ENCODE measurements at regions of chr2 and their contacts with region 1.

Region 1: DNA sequence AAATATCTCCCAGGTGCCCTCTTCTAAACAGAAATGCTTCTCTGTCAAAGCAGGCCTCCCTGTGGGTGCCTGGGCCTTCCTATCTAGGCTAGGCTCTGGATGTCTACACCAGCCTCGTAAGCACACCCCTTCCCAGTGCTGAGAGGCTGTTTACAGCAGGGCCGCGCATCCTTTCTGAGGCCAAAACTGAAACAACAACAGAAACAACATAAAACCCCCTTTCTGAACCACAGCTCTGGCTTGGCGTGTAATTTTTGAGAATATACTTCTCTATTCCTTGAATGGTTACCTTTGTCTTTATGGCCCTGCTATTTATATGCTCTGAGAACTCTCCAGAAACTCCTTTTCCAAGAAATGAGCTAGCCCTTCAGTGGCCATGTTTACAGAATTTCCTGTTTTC is 118.4 kb downstream of the BCL2L11 start:
- DNase-seq: peak; percentile 86
- H3K4me3 Mint-ChIP-seq: peak overlapping the region; percentile 63
- H3K27ac Mint-ChIP-seq: peak overlapping the region; percentile 91
- H3K4me1 Mint-ChIP-seq: peaks cover 31% of the 10 kb centered on the region
- H3K27me3 Mint-ChIP-seq: peaks cover 2% of the 10 kb centered on the region

Region 2: DNA sequence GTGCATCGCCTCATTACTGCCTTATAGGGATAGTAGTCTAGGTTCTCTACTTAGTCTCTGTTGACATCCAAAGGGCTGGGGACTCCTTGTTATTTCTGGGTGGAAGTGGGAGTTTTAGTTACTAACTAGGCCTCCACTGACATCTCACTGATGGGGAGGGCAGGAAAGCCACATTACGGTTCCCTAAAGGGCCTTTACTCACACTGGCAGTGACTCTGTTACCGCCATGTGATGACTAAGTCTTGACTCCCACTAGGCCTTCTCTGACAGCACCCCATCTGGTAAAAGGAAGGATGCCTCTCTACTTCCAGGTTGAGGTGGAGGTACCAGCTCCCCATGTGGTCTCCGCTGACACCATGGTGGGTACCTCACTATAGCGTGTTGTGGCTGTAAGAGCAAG is 132.4 kb before region 1 on chr2:
- intact Hi-C with region 1: no loop called
- DNase-seq: no peak
- H3K4me3 Mint-ChIP-seq: no peak overlapping the region
- H3K27ac Mint-ChIP-seq: no peak overlapping the region
- H3K4me1 Mint-ChIP-seq: peaks cover 10% of the 10 kb centered on the region
- H3K27me3 Mint-ChIP-seq: peaks cover 58% of the 10 kb centered on the region

Region 3: DNA sequence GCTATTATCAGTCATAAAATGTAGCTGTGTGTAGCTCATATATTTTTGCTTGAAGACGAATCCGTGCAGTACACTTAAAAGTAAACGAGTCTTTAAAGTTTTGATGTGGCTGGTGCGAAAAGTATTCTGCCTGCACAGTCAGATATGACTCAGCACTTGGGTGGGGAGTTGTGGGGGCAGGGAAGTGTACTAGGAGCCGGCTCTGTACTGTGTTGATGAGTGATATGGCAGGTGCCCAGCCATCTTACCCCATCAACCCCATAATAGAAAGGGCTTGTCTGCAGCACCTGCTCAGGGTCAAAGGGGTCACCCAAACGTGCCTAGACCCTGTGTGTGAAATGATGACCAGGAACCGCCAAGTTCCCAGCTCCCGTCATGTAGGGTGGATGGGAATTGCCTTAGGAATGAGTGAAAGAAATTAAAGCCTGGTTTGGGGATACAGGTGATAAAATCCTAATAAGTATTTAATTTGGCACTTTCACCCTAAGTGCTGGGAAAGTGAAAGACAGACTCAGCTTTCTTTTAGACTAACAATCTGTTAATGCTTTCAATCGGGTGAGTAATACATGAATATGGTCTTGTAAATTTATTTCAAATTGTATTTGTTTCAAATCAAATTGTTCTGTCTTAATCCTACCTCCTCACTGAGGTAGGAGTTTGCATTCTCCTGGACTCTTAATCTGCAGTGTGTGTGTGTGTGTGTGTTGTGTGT is 70.4 kb before region 1 on chr2:
- intact Hi-C with region 1: loop called (anchors 5 kb)
- DNase-seq: peak; percentile 87
- H3K4me3 Mint-ChIP-seq: peak overlapping the region; percentile 4
- H3K27ac Mint-ChIP-seq: peak overlapping the region; percentile 70
- H3K4me1 Mint-ChIP-seq: peaks cover 36% of the 10 kb centered on the region
- H3K27me3 Mint-ChIP-seq: peaks cover 17% of the 10 kb centered on the region

Region 4: DNA sequence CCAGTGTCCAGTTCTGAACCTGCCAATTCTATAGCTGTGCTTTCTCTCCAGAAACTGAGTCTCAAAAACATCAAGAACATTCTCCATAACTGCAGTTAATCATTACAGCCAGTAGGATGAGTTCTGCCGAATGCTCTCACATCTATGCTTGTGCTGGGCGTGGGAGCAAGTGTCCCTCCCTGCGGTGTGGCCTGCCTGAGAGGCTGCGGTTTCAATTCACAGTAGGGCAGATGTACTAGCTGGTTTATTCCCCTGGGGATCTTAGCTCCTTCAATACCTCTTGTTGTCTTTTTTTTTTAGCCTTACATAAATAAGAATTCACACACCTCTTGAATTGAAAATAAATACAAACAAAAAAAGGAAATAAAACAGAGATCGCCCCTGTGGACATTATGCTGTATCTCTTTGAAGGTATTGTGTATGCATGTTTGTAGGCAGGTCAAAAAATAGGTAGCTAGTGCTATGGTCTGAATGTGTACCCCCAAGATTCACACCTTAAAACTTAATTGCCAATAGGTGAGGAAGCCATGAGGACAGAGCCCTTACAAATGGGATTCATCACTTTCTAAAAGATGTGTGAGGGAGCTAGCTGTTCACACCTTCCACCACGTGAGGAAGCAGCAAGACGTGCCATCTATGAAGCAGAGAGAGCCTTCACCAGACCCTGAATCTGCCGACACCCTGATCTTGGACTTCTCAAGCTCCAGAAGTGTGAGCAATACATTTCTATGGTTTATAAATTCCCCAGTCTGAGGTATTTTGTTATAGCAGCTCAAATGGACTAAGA is 44.1 kb before region 1 on chr2:
- intact Hi-C with region 1: no loop called
- DNase-seq: no peak
- H3K4me3 Mint-ChIP-seq: no peak overlapping the region
- H3K27ac Mint-ChIP-seq: no peak overlapping the region
- H3K4me1 Mint-ChIP-seq: peaks cover 4% of the 10 kb centered on the region
- H3K27me3 Mint-ChIP-seq: peaks cover 27% of the 10 kb centered on the region

Measured in activated CD4-positive, alpha-beta T cell treated with anti-CD3 and anti-CD28 coated beads, Interleukin-2, amount 10 ng/mL, durations not matched to agents 24 days and 14 days (primary cell).